ENCODE measurements at regions of chr20 and their contacts with region 1.

Region 1: GRCh38 chr20:56411759-56412472 is at the start of gene CASS4:
- DNase-seq: peak in 3 of 5 donors; percentile 54 to 78 (median 63)
- H3K4me3 ChIP-seq: peak within 1 kb of the TSS; percentile 83
- H3K4me3 Mint-ChIP-seq: peak within 1 kb of the TSS; percentile 90 to 96 (median 93)
- H3K27ac ChIP-seq: peak within 1 kb of the TSS; percentile 69
- H3K27ac Mint-ChIP-seq: peak within 1 kb of the TSS; percentile 91 to 99 (median 98)
- H3K4me1 ChIP-seq: peaks cover 56% of the 10 kb centered on the region
- H3K4me1 Mint-ChIP-seq: peaks cover 45 to 57% (median 51%) of the 10 kb centered on the region in 3 donors
- H3K27me3 ChIP-seq: no peaks in the 10 kb centered on the region
- H3K27me3 Mint-ChIP-seq: no peaks in the 10 kb centered on the region
- total RNA-seq, gene CASS4: 3.7 TPM

Region 2: DNA sequence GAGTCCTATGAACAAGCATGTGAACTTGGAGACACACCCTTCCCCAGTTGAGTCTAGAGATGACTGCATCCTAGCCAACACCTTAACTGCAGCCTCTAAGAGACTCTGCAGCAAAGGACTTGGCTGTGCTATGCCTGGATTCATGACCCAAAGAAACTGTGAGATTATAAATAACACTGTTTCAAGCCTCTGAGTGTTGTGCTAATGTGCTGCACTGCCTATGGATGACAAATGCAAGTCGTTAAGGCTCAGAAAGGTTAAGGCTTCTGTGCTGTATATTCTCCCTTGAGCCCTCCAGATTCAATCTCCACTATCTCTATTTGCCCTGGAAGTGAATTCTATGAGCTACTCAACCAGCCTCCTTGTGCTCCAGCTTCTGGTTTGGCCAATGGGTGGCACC is 290.1 kb before region 1 on chr20:
- CTCF ChIA-PET with region 1: no interaction called
- POLR2A ChIA-PET with region 1: no interaction called
- DNase-seq: no peak
- H3K4me3 ChIP-seq: no peak overlapping the region
- H3K4me3 Mint-ChIP-seq: no peak overlapping the region
- H3K27ac ChIP-seq: no peak overlapping the region
- H3K27ac Mint-ChIP-seq: no peak overlapping the region
- H3K4me1 ChIP-seq: no peaks in the 10 kb centered on the region
- H3K4me1 Mint-ChIP-seq: no peaks in the 10 kb centered on the region
- H3K27me3 ChIP-seq: no peaks in the 10 kb centered on the region
- H3K27me3 Mint-ChIP-seq: no peaks in the 10 kb centered on the region

Region 3: DNA sequence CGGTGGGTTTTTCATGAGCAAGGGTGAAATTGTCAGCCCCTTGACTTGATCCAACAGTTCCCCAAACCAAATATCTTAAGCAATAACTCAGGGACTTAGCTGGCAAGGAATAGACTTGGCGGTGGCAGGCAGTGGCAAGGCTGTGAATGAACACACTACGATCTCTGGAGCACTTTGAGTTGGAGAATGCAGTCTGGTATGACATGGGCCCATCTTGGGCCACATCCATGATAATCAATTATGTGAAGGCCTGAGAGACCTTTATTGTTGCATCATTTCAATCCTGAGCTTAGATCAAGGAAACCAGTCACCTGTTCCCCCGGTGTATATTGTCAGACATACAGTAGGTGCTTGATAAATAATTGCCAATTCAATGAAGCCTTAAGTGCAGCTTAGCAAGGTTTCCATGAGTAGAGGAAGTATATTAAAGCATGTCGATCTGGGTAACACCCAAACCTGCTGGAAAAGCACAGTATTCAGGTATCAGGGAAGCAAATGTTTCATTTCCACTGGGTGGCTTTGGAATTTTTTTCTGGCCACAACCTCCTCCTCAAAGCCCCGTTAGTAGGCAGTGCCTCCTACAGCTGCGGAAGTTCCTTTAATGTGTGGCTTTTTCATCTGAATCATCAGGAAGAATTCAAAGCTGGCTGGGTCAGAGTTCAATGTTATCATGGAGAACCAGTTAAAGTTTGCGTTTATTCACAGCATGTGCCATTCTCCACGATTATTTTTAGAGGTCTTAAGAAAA is 10.3 kb after region 1 on chr20:
- CTCF ChIA-PET with region 1: interaction called, 11 read pairs
- POLR2A ChIA-PET with region 1: interaction called, 5 read pairs
- DNase-seq: no peak
- H3K4me3 ChIP-seq: peak overlapping the region; percentile 10
- H3K4me3 Mint-ChIP-seq: peak overlapping the region; percentile 4 to 46 (median 22)
- H3K27ac ChIP-seq: peak overlapping the region; percentile 41
- H3K27ac Mint-ChIP-seq: peak overlapping the region; percentile 31 to 94 (median 74)
- H3K4me1 ChIP-seq: peaks cover 58% of the 10 kb centered on the region
- H3K4me1 Mint-ChIP-seq: peaks cover 41 to 59% (median 50%) of the 10 kb centered on the region in 3 donors
- H3K27me3 ChIP-seq: no peaks in the 10 kb centered on the region
- H3K27me3 Mint-ChIP-seq: peaks cover 0 to 1% of the 10 kb centered on the region in 2 donors

Region 4: DNA sequence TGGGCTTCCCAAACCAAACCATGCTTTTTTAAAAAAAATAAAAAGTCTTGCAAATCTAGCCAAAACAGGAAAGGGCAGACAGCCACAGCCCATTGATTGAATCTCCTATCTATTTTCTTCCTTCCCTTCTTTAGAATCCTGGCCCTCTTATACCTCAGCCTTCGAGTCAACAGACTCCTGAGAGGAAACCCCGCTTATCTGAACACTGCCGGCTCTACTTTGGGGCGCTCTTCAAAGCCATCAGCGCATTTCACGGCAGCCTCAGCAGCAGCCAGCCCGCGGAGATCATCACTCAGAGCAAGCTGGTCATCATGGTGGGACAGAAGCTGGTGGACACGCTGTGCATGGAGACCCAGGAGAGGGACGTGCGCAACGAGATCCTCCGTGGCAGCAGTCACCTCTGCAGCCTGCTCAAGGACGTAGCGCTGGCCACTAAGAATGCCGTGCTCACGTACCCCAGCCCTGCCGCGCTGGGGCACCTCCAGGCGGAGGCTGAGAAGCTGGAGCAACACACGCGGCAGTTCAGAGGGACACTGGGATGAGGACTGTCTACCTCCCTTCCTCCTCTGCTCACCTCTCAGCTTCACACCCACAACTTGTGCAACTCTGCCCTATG is 46.4 kb after region 1 on chr20:
- CTCF ChIA-PET with region 1: no interaction called
- POLR2A ChIA-PET with region 1: no interaction called
- DNase-seq: no peak
- H3K4me3 ChIP-seq: no peak overlapping the region
- H3K4me3 Mint-ChIP-seq: peak overlapping the region in 1 of 7 donors; percentile 25
- H3K27ac ChIP-seq: no peak overlapping the region
- H3K27ac Mint-ChIP-seq: peak overlapping the region in 3 of 8 donors; percentile 20 to 98 (median 73)
- H3K4me1 ChIP-seq: peaks cover 19% of the 10 kb centered on the region
- H3K4me1 Mint-ChIP-seq: peaks cover 37 to 51% (median 50%) of the 10 kb centered on the region in 3 donors
- H3K27me3 ChIP-seq: no peaks in the 10 kb centered on the region
- H3K27me3 Mint-ChIP-seq: no peaks in the 10 kb centered on the region